ENCODE measurements at regions of chr20 and their contacts with region 1.

Region 1: DNA sequence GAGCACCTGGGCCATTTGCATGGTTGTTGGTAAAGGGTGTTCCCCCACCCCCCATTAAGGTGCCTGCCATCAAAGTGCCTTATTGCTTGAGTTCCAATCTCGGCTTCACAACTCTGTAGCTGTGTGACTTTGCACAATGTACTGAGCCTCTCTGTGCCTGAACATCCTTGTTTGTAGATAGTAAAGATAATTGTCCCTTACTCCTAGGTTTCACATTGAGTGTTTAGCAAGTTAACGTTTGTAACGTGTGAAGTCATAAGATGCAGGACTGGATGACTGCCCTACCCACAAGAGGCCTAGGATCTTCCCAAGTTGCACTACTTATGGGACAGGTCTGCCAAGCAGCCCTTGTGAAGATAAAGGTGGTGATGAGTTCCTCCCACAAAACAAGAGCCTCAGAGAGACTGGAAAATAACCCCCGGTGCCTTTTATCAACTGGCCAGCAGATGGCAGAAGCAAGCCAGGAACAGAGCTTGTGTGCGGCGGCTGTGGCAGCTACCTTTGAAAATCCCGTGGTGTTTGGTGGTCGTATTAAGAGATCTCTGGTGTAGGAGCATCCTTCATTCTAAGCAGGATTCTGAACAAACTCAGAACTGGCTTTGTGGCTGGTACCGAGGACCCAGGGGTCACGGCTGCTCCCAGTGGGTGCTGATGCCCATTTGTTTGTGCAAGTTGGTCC is 99.0 kb downstream of the CDH26 start:
- DNase-seq: peak; percentile 58
- ATAC-seq: peak; percentile 60 to 70

Region 2: GRCh38 chr20:60203451-60203850 is 146.2 kb after region 1 on chr20:
- intact Hi-C with region 1: loop called in 1 of 2 experiments (anchors 5 kb)
- DNase-seq: no peak
- ATAC-seq: no peak

Region 3: DNA sequence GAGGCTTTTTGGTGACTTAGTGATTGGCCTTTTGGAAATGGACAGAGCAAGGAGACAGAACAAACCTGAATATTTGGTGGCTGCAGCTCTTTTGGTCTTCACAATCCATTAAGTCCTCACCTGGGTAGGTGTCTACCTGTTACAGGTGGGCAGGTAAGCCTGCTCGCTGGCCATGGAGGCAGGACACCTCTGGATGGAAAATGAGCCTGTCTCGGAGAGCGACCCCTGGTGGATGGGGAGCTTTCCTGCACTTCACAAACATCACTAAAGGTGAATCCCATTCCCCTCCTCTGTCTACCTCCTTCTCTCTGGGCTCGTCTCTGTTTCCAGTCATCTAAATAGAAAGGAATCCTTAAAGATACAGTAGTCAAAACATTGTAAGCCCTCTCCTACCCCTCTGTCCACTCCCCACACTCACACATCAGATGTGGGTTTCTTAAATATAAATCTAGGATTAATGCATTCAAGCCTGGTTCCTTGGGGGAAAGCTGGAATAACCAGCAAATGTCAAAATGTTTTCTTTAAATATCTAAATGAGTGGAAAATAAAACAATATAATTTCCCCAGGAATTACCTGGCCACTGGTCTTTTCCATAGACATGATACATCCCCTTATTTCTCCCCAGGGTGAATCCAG is 205.8 kb after region 1 on chr20:
- intact Hi-C with region 1: loop called in 1 of 2 experiments (anchors 2 kb)
- DNase-seq: no peak
- ATAC-seq: no peak

Region 4: GRCh38 chr20:61896058-61896961 is 1839.0 kb after region 1 on chr20:
- intact Hi-C with region 1: loop called in 1 of 2 experiments (anchors 10 kb)
- DNase-seq: peak; percentile 53
- ATAC-seq: peak; percentile 22 to 71

Measured in left cardiac atrium (tissue), 4 donors.